Naive thymus-derived CD4-positive, alpha-beta T cell (primary cell): ENCODE measurements at regions of chr13 and their contacts with region 1.

Region 1: GRCh38 chr13:102792396-102792795 is 6.4 kb downstream of the POGLUT2 start:
- DNase-seq: no peak
- ATAC-seq: no peak
- H3K4me3 ChIP-seq: no peak overlapping the region
- H3K4me3 Mint-ChIP-seq: no peak overlapping the region
- H3K27ac ChIP-seq: no peak overlapping the region
- H3K27ac Mint-ChIP-seq: no peak overlapping the region
- H3K4me1 ChIP-seq: no peaks in the 10 kb centered on the region
- H3K4me1 Mint-ChIP-seq: peaks cover 0 to 7% (median 0%) of the 10 kb centered on the region in 7 donors
- H3K27me3 ChIP-seq: no peaks in the 10 kb centered on the region
- H3K27me3 Mint-ChIP-seq: peaks cover 0 to 23% (median 11%) of the 10 kb centered on the region in 5 donors

Region 2: GRCh38 chr13:102555917-102556553 is 236.4 kb before region 1 on chr13:
- CTCF ChIA-PET with region 1: no interaction called
- POLR2A ChIA-PET with region 1: no interaction called
- intact Hi-C with region 1: no loop called
- DNase-seq: peak in 5 of 9 donors; percentile 19 to 35 (median 28)
- ATAC-seq: no peak
- H3K4me3 ChIP-seq: no peak overlapping the region
- H3K4me3 Mint-ChIP-seq: no peak overlapping the region
- H3K27ac ChIP-seq: no peak overlapping the region
- H3K27ac Mint-ChIP-seq: no peak overlapping the region
- H3K4me1 ChIP-seq: no peaks in the 10 kb centered on the region
- H3K4me1 Mint-ChIP-seq: peaks cover 0 to 5% (median 0%) of the 10 kb centered on the region in 7 donors
- H3K27me3 ChIP-seq: no peaks in the 10 kb centered on the region
- H3K27me3 Mint-ChIP-seq: peaks cover 0 to 11% (median 7%) of the 10 kb centered on the region in 5 donors

Region 3: GRCh38 chr13:102721800-102722231 is 70.6 kb before region 1 on chr13:
- CTCF ChIA-PET with region 1: no interaction called
- POLR2A ChIA-PET with region 1: no interaction called
- intact Hi-C with region 1: no loop called
- DNase-seq: peak in 1 of 9 donors; percentile 2
- ATAC-seq: peak; percentile 69
- H3K4me3 ChIP-seq: no peak overlapping the region
- H3K4me3 Mint-ChIP-seq: no peak overlapping the region
- H3K27ac ChIP-seq: no peak overlapping the region
- H3K27ac Mint-ChIP-seq: peak overlapping the region in 1 of 9 donors; percentile 35
- H3K4me1 ChIP-seq: no peaks in the 10 kb centered on the region
- H3K4me1 Mint-ChIP-seq: peaks cover 0 to 2% (median 0%) of the 10 kb centered on the region in 7 donors
- H3K27me3 ChIP-seq: no peaks in the 10 kb centered on the region
- H3K27me3 Mint-ChIP-seq: peaks cover 8 to 31% (median 26%) of the 10 kb centered on the region in 5 donors

Region 4: DNA sequence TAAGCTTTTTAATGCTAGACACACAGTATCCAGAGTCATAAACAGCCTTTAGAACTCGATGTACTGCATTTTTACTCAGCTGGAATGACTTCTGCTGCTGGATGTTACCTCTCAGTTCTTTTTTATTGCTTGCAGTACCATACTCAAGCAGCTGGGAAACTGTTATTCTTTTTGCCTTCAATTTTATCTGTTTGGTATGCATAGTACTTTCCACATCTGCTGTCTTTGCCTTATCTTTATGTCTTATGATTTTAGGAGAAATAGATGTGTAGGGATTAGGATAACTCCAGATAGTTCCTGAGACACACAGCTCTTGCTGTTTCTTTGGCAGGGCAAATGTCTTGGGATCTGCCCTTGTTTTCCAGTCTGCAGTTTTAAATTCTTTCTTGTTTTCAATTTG is 50.3 kb before region 1 on chr13:
- CTCF ChIA-PET with region 1: no interaction called
- POLR2A ChIA-PET with region 1: no interaction called
- intact Hi-C with region 1: no loop called
- DNase-seq: no peak
- ATAC-seq: no peak
- H3K4me3 ChIP-seq: no peak overlapping the region
- H3K4me3 Mint-ChIP-seq: no peak overlapping the region
- H3K27ac ChIP-seq: no peak overlapping the region
- H3K27ac Mint-ChIP-seq: no peak overlapping the region
- H3K4me1 ChIP-seq: no peaks in the 10 kb centered on the region
- H3K4me1 Mint-ChIP-seq: peaks cover 0 to 28% (median 0%) of the 10 kb centered on the region in 7 donors
- H3K27me3 ChIP-seq: no peaks in the 10 kb centered on the region
- H3K27me3 Mint-ChIP-seq: peaks cover 40 to 65% (median 53%) of the 10 kb centered on the region in 5 donors

Region 5: GRCh38 chr13:102779436-102780159 is 12.8 kb before region 1 on chr13:
- CTCF ChIA-PET with region 1: no interaction called
- POLR2A ChIA-PET with region 1: interaction called, 3 read pairs
- intact Hi-C with region 1: loop called in 1 of 2 experiments (anchors 1 kb)
- DNase-seq: peak in 4 of 9 donors; percentile 11 to 41 (median 17)
- ATAC-seq: peak; percentile 80
- H3K4me3 ChIP-seq: no peak overlapping the region
- H3K4me3 Mint-ChIP-seq: peak overlapping the region in 7 of 10 donors; percentile 3 to 78 (median 22)
- H3K27ac ChIP-seq: no peak overlapping the region
- H3K27ac Mint-ChIP-seq: peak overlapping the region; percentile 1 to 93 (median 51)
- H3K4me1 ChIP-seq: peaks cover 6 to 18% of the 10 kb centered on the region in 2 donors
- H3K4me1 Mint-ChIP-seq: peaks cover 12 to 42% (median 25%) of the 10 kb centered on the region in 7 donors
- H3K27me3 ChIP-seq: no peaks in the 10 kb centered on the region
- H3K27me3 Mint-ChIP-seq: no peaks in the 10 kb centered on the region

Region 6: DNA sequence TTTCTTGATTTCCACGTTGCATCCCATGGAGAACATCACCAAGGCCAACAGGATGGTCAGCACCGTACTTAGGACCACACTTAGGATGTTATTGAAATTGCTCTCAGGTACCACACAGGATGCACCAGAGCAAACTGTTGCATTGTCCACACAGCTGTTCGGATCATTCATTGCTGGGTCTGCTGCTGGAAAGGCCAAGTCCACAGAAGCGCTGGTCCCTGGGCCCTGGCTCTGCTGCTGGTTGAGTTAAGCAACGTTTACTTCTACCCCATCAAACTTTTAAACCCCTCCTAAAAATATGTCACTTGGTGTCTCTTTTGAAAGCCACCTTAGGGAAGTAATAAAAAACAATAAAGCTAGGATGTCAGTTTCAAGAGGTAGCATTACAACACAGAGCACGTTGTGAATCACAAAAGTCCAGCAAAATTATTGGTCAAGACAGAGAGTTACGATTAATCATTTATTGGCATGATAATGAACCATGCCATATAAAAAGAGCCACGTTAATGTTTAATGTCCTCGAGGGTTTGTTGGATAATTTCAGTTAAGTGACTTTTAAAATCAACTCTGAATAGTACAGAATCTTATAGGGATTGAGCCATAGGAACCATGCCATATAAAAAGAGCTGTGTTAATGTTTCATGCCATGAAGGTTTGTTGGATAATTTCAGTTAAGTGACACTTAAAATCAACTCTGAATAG is 273.8 kb after region 1 on chr13 and contains the start of gene SLC10A2:
- CTCF ChIA-PET with region 1: no interaction called
- POLR2A ChIA-PET with region 1: no interaction called
- intact Hi-C with region 1: no loop called
- DNase-seq: no peak
- ATAC-seq: no peak
- H3K4me3 ChIP-seq: no peak within 1 kb of the TSS
- H3K4me3 Mint-ChIP-seq: no peak within 1 kb of the TSS
- H3K27ac ChIP-seq: no peak within 1 kb of the TSS
- H3K27ac Mint-ChIP-seq: no peak within 1 kb of the TSS
- H3K4me1 ChIP-seq: no peaks in the 10 kb centered on the region
- H3K4me1 Mint-ChIP-seq: no peaks in the 10 kb centered on the region
- H3K27me3 ChIP-seq: no peaks in the 10 kb centered on the region
- H3K27me3 Mint-ChIP-seq: no peaks in the 10 kb centered on the region
- total RNA-seq, gene SLC10A2: not detected